ENCODE measurements at regions of chr11 and their contacts with region 1.

Region 1: DNA sequence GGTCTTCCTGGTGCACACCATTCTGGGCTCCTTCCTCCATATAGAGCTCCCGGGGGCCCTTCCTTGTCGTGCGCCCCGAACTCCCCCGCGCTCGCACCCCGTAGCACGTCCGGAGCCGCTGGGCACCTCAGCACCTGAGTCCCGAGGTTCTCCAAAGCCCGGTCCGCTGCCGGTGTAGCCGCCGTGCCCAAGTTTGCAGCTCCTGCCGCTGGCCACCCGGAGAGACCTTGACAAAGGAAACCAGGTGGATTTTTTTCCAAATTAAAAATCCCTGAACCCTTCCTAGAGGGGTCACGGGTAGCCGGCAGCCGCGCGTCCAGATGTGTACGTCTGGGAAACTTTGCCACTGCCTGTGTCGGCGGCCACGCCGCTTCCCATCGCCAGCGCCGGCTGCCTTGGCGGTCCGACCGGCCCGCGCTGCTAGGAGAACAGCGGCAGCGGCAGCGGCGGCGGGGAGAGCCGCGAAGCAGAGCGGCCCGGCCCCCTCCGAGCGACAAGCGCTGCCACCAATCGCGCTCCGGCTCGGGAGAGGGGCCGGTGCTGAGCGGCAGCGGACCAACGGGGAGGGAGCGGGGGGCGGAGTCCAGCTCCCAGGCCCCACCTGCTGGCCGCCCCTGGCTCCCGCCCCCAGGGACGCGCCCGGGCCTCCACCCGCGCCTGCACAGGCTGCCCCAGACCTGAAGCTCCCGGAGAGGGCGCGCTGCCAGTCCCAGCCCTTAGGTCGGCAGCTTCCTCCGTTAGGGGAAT is at the start of gene GALNT18:
- DNase-seq: peak; percentile 94 to 96 (median 95)
- ATAC-seq: peak; percentile 93 to 97 (median 96)
- H3K4me3 ChIP-seq: peak within 1 kb of the TSS; percentile 46 to 85 (median 73)
- H3K27ac ChIP-seq: peak within 1 kb of the TSS; percentile 62 to 86 (median 80)
- H3K4me1 ChIP-seq: peaks cover 0 to 42% (median 12%) of the 10 kb centered on the region in 12 donors
- H3K27me3 ChIP-seq: peaks cover 0 to 26% (median 0%) of the 10 kb centered on the region in 9 donors
- CTCF ChIP-seq: peak; percentile 38 to 76 (median 54)
- POLR2A ChIP-seq: peak in 1 of 2 donors; percentile 92
- total RNA-seq, gene GALNT18: 10.5 to 31.8 (median 17.3) TPM

Region 2: GRCh38 chr11:11036848-11037732 is 584.7 kb before region 1 on chr11:
- intact Hi-C with region 1: loop called in 5 of 10 experiments (anchors 5 to 10 kb)
- DNase-seq: peak in 2 of 5 donors; percentile 39
- ATAC-seq: peak; percentile 68 to 88 (median 78)
- H3K4me3 ChIP-seq: no peak overlapping the region
- H3K27ac ChIP-seq: peak overlapping the region in 1 of 12 donors; percentile 75
- H3K4me1 ChIP-seq: no peaks in the 10 kb centered on the region
- H3K27me3 ChIP-seq: no peaks in the 10 kb centered on the region
- CTCF ChIP-seq: peak; percentile 66 to 88 (median 80)
- POLR2A ChIP-seq: no peak

Region 3: GRCh38 chr11:11400635-11401232 is 221.0 kb before region 1 on chr11:
- intact Hi-C with region 1: loop called in 8 of 10 experiments (anchors 5 to 10 kb)
- DNase-seq: no peak
- ATAC-seq: no peak
- H3K4me3 ChIP-seq: no peak overlapping the region
- H3K27ac ChIP-seq: no peak overlapping the region
- H3K4me1 ChIP-seq: peaks cover 0 to 43% (median 10%) of the 10 kb centered on the region in 12 donors
- H3K27me3 ChIP-seq: no peaks in the 10 kb centered on the region
- CTCF ChIP-seq: peak in 7 of 12 donors; percentile 6 to 36 (median 19)
- POLR2A ChIP-seq: no peak

Region 4: GRCh38 chr11:11422411-11423128 is 199.2 kb before region 1 on chr11:
- intact Hi-C with region 1: loop called in 1 of 10 experiments (anchors 5 kb)
- DNase-seq: no peak
- ATAC-seq: no peak
- H3K4me3 ChIP-seq: no peak overlapping the region
- H3K27ac ChIP-seq: no peak overlapping the region
- H3K4me1 ChIP-seq: peaks cover 6 to 54% (median 28%) of the 10 kb centered on the region in 12 donors
- H3K27me3 ChIP-seq: peaks cover 0 to 5% (median 0%) of the 10 kb centered on the region in 9 donors
- CTCF ChIP-seq: no peak
- POLR2A ChIP-seq: no peak

Region 5: GRCh38 chr11:11545285-11546275 is 76.2 kb before region 1 on chr11:
- intact Hi-C with region 1: loop called in 1 of 10 experiments (anchors 10 kb)
- DNase-seq: no peak
- ATAC-seq: peak in 1 of 4 donors; percentile 16
- H3K4me3 ChIP-seq: no peak overlapping the region
- H3K27ac ChIP-seq: peak overlapping the region in 8 of 12 donors; percentile 73 to 87 (median 81)
- H3K4me1 ChIP-seq: peaks cover 0 to 78% (median 41%) of the 10 kb centered on the region in 12 donors
- H3K27me3 ChIP-seq: no peaks in the 10 kb centered on the region
- CTCF ChIP-seq: no peak
- POLR2A ChIP-seq: no peak

Region 6: DNA sequence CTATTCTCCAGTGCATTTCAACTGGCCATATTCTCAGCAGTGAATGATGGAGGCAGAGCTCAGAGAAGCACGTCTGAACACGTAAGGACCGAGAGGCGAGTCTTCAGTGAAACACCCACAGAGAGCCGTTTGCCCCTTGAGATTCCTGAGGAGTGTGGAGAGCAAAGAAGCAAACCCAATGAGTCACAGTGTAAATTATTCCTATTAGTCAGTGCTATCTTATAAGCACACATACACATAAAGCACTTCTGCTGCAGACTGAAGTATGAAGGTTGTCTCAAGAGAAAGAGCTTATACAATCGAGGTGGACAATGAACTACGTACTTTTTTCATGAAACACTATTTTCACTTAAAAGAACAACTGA is 37.3 kb before region 1 on chr11:
- intact Hi-C with region 1: loop called in 4 of 10 experiments (anchors 5 kb)
- DNase-seq: no peak
- ATAC-seq: peak in 1 of 4 donors; percentile 22
- H3K4me3 ChIP-seq: no peak overlapping the region
- H3K27ac ChIP-seq: peak overlapping the region in 2 of 12 donors; percentile 44 to 56
- H3K4me1 ChIP-seq: peaks cover 12 to 88% (median 52%) of the 10 kb centered on the region in 12 donors
- H3K27me3 ChIP-seq: no peaks in the 10 kb centered on the region
- CTCF ChIP-seq: no peak
- POLR2A ChIP-seq: no peak